Colonic mucosa (tissue), 4 donors: ENCODE measurements at regions of chr12 and their contacts with region 1.

Region 1: DNA sequence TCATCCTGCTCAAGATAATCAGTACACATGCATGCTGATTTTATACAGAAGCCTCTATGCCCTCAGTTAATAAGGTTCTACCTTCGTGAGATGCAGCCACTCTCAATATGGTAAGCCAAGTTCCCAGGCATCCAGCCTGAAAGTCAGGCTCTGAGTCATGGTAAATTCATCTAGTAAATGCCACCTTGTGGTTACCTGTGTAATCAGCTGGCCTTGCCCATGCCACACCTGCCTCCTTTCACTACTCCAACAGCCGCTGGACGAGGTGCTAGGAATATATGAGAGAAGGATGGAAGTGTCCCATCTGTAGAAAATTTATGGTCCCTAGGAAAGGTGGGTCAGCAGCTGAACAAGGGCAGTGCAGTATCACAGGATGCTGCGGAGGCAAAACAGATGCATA is 207.3 kb downstream of the SSPN start:
- DNase-seq: peak; percentile 56
- H3K4me3 ChIP-seq: no peak overlapping the region
- H3K27ac ChIP-seq: no peak overlapping the region
- H3K4me1 ChIP-seq: no peaks in the 10 kb centered on the region
- H3K27me3 ChIP-seq: no peaks in the 10 kb centered on the region
- CTCF ChIP-seq: peak; percentile 39

Region 2: GRCh38 chr12:26119391-26119981 is 283.2 kb before region 1 on chr12:
- intact Hi-C with region 1: loop called (anchors 5 kb)
- DNase-seq: peak; percentile 40
- H3K4me3 ChIP-seq: no peak overlapping the region
- H3K27ac ChIP-seq: no peak overlapping the region
- H3K4me1 ChIP-seq: no peaks in the 10 kb centered on the region
- H3K27me3 ChIP-seq: no peaks in the 10 kb centered on the region
- CTCF ChIP-seq: peak; percentile 51

Region 3: GRCh38 chr12:26452511-26452910 is 49.9 kb after region 1 on chr12:
- intact Hi-C with region 1: no loop called
- DNase-seq: no peak
- H3K4me3 ChIP-seq: no peak overlapping the region
- H3K27ac ChIP-seq: no peak overlapping the region
- H3K4me1 ChIP-seq: no peaks in the 10 kb centered on the region
- H3K27me3 ChIP-seq: no peaks in the 10 kb centered on the region
- CTCF ChIP-seq: no peak

Region 4: DNA sequence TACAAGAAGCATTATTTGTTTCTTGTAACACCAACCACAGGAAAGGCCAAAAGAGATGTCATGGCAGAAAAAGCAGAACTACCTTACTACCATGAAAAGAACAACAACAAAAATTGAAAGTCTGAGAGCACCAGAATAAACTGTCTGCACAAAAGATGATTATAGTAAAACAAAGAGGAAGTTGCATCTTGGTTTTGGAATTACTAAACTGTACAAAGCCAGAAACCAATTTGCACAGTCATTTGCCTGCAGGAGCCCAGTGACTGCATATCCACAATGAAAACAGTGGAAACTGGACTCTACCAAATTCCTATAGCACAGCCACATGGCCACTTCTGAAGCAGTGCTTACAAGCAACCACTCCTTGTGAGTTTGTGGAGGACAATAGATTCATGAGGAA is 68.9 kb after region 1 on chr12:
- intact Hi-C with region 1: no loop called
- DNase-seq: no peak
- H3K4me3 ChIP-seq: no peak overlapping the region
- H3K27ac ChIP-seq: no peak overlapping the region
- H3K4me1 ChIP-seq: no peaks in the 10 kb centered on the region
- H3K27me3 ChIP-seq: no peaks in the 10 kb centered on the region
- CTCF ChIP-seq: no peak